ENCODE measurements at regions of chr2 and their contacts with region 1.

Region 1: GRCh38 chr2:233443468-233444183 is 89.3 kb downstream of the DGKD start:
- DNase-seq: peak; percentile 74 to 92 (median 80)
- ATAC-seq: peak; percentile 96 to 99
- H3K4me3 Mint-ChIP-seq: peak overlapping the region in 4 of 10 donors; percentile 4 to 51 (median 34)
- H3K27ac Mint-ChIP-seq: peak overlapping the region; percentile 56 to 95 (median 82)
- H3K4me1 Mint-ChIP-seq: peaks cover 23 to 52% (median 38%) of the 10 kb centered on the region in 4 donors
- H3K27me3 Mint-ChIP-seq: no peaks in the 10 kb centered on the region

Region 2: GRCh38 chr2:233331536-233331935 is 112.1 kb before region 1 on chr2:
- POLR2A ChIA-PET with region 1: no interaction called
- DNase-seq: peak; percentile 38 to 90 (median 80)
- ATAC-seq: peak; percentile 96
- H3K4me3 Mint-ChIP-seq: peak overlapping the region; percentile 47 to 85 (median 72)
- H3K27ac Mint-ChIP-seq: peak overlapping the region; percentile 89 to 99 (median 98)
- H3K4me1 Mint-ChIP-seq: peaks cover 29 to 76% (median 47%) of the 10 kb centered on the region in 4 donors
- H3K27me3 Mint-ChIP-seq: no peaks in the 10 kb centered on the region

Region 3: GRCh38 chr2:233385489-233386044 is 58.1 kb before region 1 on chr2:
- POLR2A ChIA-PET with region 1: no interaction called
- DNase-seq: peak; percentile 35 to 83 (median 61)
- ATAC-seq: peak; percentile 70 to 80
- H3K4me3 Mint-ChIP-seq: peak overlapping the region; percentile 73 to 88 (median 80)
- H3K27ac Mint-ChIP-seq: peak overlapping the region; percentile 91 to 96 (median 93)
- H3K4me1 Mint-ChIP-seq: peaks cover 58 to 94% (median 91%) of the 10 kb centered on the region in 4 donors
- H3K27me3 Mint-ChIP-seq: no peaks in the 10 kb centered on the region

Region 4: DNA sequence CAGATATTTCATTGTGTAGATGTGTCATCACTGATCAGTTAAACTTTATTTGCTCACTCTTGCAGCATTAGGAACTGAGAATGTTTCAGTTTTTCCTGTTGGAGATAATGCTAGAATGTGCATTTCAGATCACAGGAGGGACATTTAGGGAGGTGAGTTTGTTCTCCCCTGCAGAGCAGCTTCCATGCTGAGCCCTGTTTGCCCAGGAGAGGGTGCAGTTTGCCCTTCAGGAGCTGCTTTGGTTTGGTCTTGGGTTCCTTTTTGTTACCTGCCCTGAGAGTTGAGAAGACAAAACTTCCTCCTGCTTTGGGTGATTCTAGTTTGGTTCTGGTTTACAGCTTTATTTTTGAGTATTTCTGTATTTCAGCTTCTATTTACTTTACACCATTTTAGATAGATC is 39.4 kb before region 1 on chr2:
- POLR2A ChIA-PET with region 1: interaction called, 26 read pairs
- DNase-seq: peak; percentile 44 to 88 (median 70)
- ATAC-seq: peak; percentile 54 to 64
- H3K4me3 Mint-ChIP-seq: peak overlapping the region in 7 of 10 donors; percentile 30 to 76 (median 47)
- H3K27ac Mint-ChIP-seq: peak overlapping the region; percentile 53 to 94 (median 83)
- H3K4me1 Mint-ChIP-seq: peaks cover 46 to 89% (median 84%) of the 10 kb centered on the region in 4 donors
- H3K27me3 Mint-ChIP-seq: no peaks in the 10 kb centered on the region